A549 (cell line): ENCODE measurements at regions of chr17 and their contacts with region 1.

Region 1: DNA sequence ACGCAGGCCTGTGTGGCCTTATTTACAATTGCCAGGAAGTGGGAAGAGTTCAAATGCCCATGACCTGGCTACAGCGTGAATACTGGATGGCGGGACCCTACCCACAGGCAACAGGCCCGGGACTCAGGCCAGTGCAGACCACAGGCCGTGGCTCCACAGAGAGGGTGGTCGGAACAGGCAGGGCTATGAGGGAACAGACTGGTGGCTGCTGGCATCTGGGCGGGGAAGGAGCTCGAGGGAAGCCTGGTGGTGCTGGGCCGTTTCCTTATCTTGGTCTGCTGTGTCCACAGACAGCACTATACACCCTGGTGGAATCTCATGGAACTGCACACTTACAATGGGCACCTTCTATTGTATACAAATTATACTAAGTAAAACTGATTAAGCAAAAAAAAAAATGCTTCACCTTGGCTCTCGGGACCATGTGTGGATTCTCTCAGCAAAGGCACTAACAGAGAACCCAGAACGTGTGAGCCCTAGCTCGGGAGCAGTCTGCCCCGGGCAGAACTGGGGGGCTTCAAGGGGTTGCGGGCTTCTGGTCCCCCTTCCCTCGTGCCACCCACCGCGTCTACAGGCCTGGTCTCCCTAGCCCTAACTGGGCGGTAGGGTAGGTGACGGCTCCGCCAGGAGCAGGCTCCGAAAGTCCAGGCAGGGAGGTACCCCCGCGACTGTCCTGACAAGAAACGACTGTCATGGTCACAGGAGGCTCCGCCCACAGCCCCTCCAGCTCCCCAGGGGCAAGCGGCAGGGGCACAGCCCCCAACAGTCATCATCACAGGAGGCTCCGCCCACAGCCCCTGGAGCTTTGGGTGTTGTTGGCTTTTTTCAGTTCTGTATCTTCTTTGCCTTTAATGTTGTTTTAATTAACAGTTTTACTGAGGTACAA is 21.8 kb downstream of the CEP131 start:
- DNase-seq: peak; percentile 81 to 92
- ATAC-seq: peak; percentile 86 to 96
- H3K4me3 ChIP-seq: no peak overlapping the region
- H3K27ac ChIP-seq: peak overlapping the region in 1 of 2 experiments; percentile 66; a peak in 2 of 6 replicates
- H3K4me1 ChIP-seq: no peaks in the 10 kb centered on the region
- CTCF ChIP-seq: peak; percentile 46
- EP300 ChIP-seq: no peak
- POLR2A ChIP-seq: no peak
- RAD21 ChIP-seq: peak; percentile 38 to 49; a peak in 3 of 5 replicates

Region 2: DNA sequence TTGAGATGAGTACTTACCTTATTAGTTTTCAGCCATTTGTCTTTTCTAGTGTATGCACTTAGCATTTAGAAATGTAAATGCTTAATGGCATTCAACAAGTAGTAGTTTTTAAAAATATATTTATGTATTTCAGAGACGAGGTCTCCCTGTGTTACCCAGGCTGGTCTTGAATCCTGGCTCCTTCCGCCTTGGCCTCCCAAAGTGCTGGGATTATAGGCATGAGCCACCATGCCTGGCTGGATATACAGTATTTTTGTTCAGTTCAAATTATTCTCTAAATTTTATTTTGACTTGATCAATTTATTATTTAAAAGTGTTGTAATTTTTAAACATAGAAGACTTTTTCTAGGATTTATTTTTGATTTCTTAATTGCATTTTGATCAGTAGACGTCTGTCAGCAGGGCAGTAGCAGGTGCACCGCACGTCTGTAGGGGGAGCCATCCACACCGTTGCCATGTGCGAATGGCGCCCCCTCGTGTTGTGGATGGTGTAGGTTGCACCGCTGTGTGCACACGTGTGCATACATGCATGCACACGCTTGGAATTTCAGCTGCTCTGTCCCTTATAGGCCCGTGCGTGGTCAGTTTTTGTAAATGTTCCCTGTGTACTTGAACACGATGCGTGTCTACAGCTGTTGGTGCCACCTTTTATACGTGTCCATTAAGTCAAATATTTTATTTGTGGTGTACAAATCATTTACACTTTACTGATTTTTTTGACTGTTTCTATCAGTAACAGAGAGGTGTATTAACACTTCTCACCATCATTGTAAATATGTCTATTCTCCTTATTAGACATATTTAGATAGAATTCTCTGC is 625.7 kb before region 1 on chr17:
- CTCF ChIA-PET with region 1: no interaction called
- POLR2A ChIA-PET with region 1: no interaction called
- DNase-seq: peak; percentile 95
- ATAC-seq: peak; percentile 99 to 100
- H3K4me3 ChIP-seq: no peak overlapping the region
- H3K27ac ChIP-seq: no peak overlapping the region
- H3K4me1 ChIP-seq: no peaks in the 10 kb centered on the region
- CTCF ChIP-seq: peak; percentile 100
- EP300 ChIP-seq: no peak
- POLR2A ChIP-seq: no peak
- RAD21 ChIP-seq: peak; percentile 99

Region 3: DNA sequence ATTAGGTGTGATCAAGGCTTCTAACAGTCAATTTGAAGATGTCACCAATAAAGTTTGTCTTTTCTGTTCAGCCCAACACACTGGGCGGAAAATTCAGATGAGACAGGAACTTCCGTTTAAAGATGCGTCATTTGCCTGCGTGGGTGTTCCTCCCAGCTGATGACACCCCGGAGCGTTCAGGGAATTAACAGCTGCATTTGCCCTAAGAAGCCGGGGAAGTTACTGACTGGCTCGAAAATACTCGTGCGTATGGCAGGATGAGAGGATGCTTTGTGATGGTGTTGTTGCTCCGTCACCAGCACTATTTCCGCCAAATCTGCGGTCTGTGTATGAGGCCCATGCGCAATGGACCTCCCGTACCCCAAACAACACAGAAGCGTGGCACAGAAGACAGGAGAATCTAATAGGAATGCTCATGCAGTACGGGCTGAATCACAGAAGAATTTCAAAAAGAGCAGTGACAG is 47.6 kb before region 1 on chr17:
- CTCF ChIA-PET with region 1: interaction called, 175 read pairs
- POLR2A ChIA-PET with region 1: no interaction called
- DNase-seq: no peak
- ATAC-seq: no peak
- H3K4me3 ChIP-seq: no peak overlapping the region
- H3K27ac ChIP-seq: no peak overlapping the region
- H3K4me1 ChIP-seq: no peaks in the 10 kb centered on the region
- CTCF ChIP-seq: no peak
- EP300 ChIP-seq: no peak
- POLR2A ChIP-seq: no peak
- RAD21 ChIP-seq: no peak

Region 4: DNA sequence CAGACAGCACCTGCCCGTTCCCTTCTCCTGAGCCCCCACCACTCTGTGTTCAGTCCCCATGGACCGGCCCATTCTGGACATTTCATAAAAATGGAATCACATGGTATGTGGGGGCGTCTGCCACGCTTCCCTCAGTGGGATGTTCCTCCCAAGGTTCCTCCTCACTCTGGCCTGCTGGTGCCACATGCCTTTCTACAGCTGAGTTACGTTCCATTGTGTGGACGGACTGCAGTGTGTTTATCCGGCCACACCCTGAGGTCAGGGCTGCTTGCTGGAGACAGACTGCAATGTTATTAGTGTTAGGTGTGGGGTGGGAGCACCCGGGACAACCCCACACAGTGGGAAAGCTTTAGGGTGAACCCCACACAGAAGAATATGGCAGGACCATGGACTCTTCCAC is 29.0 kb before region 1 on chr17:
- CTCF ChIA-PET with region 1: interaction called, 10 read pairs
- POLR2A ChIA-PET with region 1: no interaction called
- DNase-seq: no peak
- ATAC-seq: no peak
- H3K4me3 ChIP-seq: no peak overlapping the region
- H3K27ac ChIP-seq: no peak overlapping the region
- H3K4me1 ChIP-seq: no peaks in the 10 kb centered on the region
- CTCF ChIP-seq: no peak
- EP300 ChIP-seq: no peak
- POLR2A ChIP-seq: no peak
- RAD21 ChIP-seq: no peak

Region 5: DNA sequence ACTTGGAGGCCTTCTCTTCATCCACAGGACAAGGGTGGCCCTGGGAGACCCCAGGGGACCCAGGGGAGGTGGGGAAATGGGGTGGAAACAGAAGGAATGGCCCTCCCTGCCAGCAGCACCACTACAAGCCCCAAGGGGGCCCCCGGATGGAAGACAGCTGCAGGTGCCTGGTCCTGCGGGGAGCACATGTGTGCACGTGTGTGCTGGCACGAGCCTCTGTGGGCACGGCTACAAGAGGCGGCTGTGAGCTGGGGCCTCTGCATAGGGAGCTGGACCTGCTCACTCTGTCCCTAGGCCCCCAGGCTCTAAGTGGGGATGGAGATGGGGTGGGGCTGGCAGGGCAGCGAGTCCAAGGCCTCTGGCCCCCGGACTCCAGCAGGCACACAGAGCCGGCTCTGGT is 21.7 kb before region 1 on chr17:
- CTCF ChIA-PET with region 1: interaction called, 36 read pairs
- POLR2A ChIA-PET with region 1: no interaction called
- DNase-seq: no peak
- ATAC-seq: peak in 1 of 2 experiments; percentile 31; a peak in 2 of 6 replicates
- H3K4me3 ChIP-seq: no peak overlapping the region
- H3K27ac ChIP-seq: no peak overlapping the region
- H3K4me1 ChIP-seq: no peaks in the 10 kb centered on the region
- CTCF ChIP-seq: no peak
- EP300 ChIP-seq: no peak
- POLR2A ChIP-seq: no peak
- RAD21 ChIP-seq: no peak

Region 6: DNA sequence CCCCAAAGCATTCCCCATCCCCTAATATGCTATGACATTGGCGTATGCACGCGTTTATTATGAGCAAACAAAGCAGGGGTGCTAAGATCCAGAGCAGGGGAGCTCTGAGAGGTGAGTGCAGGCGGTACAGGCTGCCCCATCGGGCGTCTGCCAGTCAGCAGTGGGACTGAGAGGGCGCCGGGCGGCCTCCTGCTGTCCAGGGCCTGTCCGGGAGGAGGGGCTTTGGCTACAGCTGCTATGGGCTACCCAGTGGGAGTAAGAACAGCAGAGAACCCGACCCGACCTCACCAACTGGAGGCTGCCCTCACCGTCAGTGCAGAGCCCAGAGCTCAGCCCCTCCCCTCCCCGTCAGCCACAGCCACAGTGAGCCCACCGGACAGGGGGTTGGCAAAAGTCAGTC is 16.4 kb before region 1 on chr17:
- CTCF ChIA-PET with region 1: interaction called, 58 read pairs
- POLR2A ChIA-PET with region 1: no interaction called
- DNase-seq: no peak
- ATAC-seq: peak in 1 of 2 experiments; percentile 13; a peak in 2 of 6 replicates
- H3K4me3 ChIP-seq: no peak overlapping the region
- H3K27ac ChIP-seq: no peak overlapping the region
- H3K4me1 ChIP-seq: no peaks in the 10 kb centered on the region
- CTCF ChIP-seq: no peak
- EP300 ChIP-seq: no peak
- POLR2A ChIP-seq: no peak
- RAD21 ChIP-seq: no peak

Region 7: GRCh38 chr17:81189670-81190530 is 11.0 kb before region 1 on chr17:
- CTCF ChIA-PET with region 1: interaction called, 58 read pairs
- POLR2A ChIA-PET with region 1: no interaction called
- DNase-seq: peak; percentile 46 to 52
- ATAC-seq: peak; percentile 45 to 80; a peak in 5 of 6 replicates
- H3K4me3 ChIP-seq: no peak overlapping the region
- H3K27ac ChIP-seq: no peak overlapping the region
- H3K4me1 ChIP-seq: no peaks in the 10 kb centered on the region
- CTCF ChIP-seq: peak; percentile 25; the same call in 2 of the 3 replicates
- EP300 ChIP-seq: no peak
- POLR2A ChIP-seq: no peak
- RAD21 ChIP-seq: peak in 1 of 2 experiments; percentile 60; a peak in 4 of 5 replicates

Region 8: GRCh38 chr17:81222906-81223761 is 22.2 kb after region 1 on chr17 and contains the start of gene CEP131:
- CTCF ChIA-PET with region 1: interaction called, 12 read pairs
- POLR2A ChIA-PET with region 1: interaction called, 3 read pairs
- DNase-seq: peak; percentile 100
- ATAC-seq: peak; percentile 95 to 99
- H3K4me3 ChIP-seq: peak within 1 kb of the TSS; percentile 79
- H3K27ac ChIP-seq: peak within 1 kb of the TSS; percentile 70 to 88
- H3K4me1 ChIP-seq: peaks cover 9% of the 10 kb centered on the region
- CTCF ChIP-seq: no peak
- EP300 ChIP-seq: no peak
- POLR2A ChIP-seq: peak; percentile 87
- RAD21 ChIP-seq: no peak
- polyA plus RNA-seq, gene CEP131: 2.6 and 3.3 TPM in 2 replicates

Region 9: GRCh38 chr17:81277421-81277820 is 76.5 kb after region 1 on chr17:
- CTCF ChIA-PET with region 1: no interaction called
- POLR2A ChIA-PET with region 1: no interaction called
- DNase-seq: no peak
- ATAC-seq: no peak
- H3K4me3 ChIP-seq: no peak overlapping the region
- H3K27ac ChIP-seq: no peak overlapping the region
- H3K4me1 ChIP-seq: no peaks in the 10 kb centered on the region
- CTCF ChIP-seq: no peak
- EP300 ChIP-seq: no peak
- POLR2A ChIP-seq: no peak
- RAD21 ChIP-seq: no peak